Dendritic cell treated with granulocyte-macrophage colony-stimulating factor and Interleukin-4, amounts not matched to agents 40 ng/mL and 50 ng/mL, for 4 days (primary cell): ENCODE measurements at regions of chr14 and their contacts with region 1.

Region 1: DNA sequence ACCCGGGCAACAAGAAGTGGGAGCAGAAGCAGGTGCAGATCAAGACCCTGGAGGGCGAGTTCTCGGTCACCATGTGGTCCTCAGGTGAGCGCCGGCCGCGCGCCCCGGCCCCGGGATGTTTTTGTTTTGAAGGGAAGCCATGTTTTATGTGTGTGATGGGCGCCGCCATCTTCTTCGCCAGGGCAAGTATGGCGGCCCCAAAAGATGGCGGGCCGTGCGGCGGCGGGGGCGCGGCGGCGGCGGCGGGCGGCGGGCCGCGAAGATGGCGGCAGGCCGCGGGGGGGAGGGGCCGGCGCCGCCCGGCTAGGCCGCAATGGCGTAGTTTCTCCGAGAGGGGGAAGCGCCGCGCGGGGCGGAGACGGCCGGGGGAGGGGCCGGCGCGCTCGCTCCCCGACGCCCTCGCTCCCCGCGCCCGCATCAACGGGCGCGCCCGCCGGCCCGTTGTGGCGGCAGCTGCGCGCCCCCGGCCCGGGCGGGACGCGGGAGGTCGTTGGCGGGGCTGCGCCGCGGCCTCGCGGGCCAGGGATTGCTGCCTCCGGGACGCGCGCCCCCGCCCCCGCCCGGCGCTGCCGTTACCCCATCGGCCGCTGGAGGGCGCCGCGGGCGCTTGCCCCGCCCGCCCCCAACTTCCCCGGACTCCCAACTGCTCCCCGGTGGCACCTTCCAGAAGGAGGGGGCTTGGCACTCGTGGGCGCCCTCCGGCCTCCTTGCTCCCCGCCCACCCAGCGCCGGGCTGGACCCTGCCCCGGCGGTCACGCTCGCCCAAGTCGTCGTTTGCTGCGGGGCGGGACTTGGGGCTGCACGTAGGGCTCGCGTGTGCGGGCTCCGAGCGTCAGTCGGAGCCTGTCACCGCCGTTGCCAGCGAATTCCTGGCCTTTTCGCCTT is 1.1 kb downstream of the YY1 start:
- H3K4me3 Mint-ChIP-seq: peak overlapping the region; percentile 88
- H3K27ac Mint-ChIP-seq: peak overlapping the region; percentile 91
- H3K4me1 Mint-ChIP-seq: peaks cover 54% of the 10 kb centered on the region
- H3K27me3 Mint-ChIP-seq: no peaks in the 10 kb centered on the region

Region 2: GRCh38 chr14:100165831-100166440 is 74.1 kb before region 1 on chr14:
- intact Hi-C with region 1: loop called (anchors 2 kb)
- H3K4me3 Mint-ChIP-seq: no peak overlapping the region
- H3K27ac Mint-ChIP-seq: peak overlapping the region; percentile 80
- H3K4me1 Mint-ChIP-seq: peaks cover 19% of the 10 kb centered on the region
- H3K27me3 Mint-ChIP-seq: peaks cover 21% of the 10 kb centered on the region

Region 3: GRCh38 chr14:100192672-100193416 is 47.2 kb before region 1 on chr14:
- intact Hi-C with region 1: loop called (anchors 2 kb)
- H3K4me3 Mint-ChIP-seq: peak overlapping the region; percentile 82
- H3K27ac Mint-ChIP-seq: peak overlapping the region; percentile 96
- H3K4me1 Mint-ChIP-seq: peaks cover 20% of the 10 kb centered on the region
- H3K27me3 Mint-ChIP-seq: no peaks in the 10 kb centered on the region

Region 4: DNA sequence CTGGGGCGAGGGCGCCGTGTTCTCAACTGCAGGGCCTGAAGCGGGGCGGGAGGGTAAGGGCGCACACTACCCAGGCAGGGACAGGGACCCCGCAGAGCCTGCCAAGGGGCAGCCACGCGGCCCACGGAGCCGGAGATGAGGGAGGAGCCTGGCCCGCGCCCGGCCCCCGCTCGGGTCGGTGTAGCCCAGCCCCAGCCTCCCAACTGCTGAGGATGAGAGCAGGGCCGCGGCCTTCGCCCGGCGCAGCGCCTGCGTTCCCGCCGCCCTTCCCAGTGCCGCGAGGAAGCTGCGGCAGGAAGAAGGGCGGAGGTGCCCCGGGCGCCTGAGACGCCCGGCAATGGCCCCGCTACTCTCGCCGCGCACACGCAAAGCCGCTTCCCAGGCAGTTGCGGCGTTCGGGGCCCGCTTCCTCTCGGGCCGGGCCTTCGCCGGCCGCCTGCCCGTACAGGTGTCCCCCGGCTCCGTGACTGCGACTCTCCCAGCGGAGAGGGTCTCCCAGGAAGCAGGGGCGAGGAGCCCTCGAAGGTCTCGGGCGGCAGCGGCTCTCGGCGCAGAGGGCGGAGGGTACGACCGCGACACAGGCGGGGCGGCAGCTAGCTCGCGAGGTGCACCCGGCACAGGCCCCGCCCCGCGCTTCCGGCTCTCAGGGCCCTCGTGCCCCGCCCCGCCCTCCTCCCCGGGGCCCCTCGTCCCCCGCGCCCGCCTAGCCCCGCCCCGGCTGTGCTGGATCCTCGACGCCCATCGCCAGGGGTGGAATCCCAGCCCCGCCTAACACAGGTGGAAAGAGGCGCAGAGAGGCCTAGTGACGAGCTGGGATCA is 25.9 kb before region 1 on chr14:
- intact Hi-C with region 1: loop called (anchors 2 kb)
- H3K4me3 Mint-ChIP-seq: peak overlapping the region; percentile 78
- H3K27ac Mint-ChIP-seq: peak overlapping the region; percentile 91
- H3K4me1 Mint-ChIP-seq: peaks cover 35% of the 10 kb centered on the region
- H3K27me3 Mint-ChIP-seq: no peaks in the 10 kb centered on the region

Region 5: DNA sequence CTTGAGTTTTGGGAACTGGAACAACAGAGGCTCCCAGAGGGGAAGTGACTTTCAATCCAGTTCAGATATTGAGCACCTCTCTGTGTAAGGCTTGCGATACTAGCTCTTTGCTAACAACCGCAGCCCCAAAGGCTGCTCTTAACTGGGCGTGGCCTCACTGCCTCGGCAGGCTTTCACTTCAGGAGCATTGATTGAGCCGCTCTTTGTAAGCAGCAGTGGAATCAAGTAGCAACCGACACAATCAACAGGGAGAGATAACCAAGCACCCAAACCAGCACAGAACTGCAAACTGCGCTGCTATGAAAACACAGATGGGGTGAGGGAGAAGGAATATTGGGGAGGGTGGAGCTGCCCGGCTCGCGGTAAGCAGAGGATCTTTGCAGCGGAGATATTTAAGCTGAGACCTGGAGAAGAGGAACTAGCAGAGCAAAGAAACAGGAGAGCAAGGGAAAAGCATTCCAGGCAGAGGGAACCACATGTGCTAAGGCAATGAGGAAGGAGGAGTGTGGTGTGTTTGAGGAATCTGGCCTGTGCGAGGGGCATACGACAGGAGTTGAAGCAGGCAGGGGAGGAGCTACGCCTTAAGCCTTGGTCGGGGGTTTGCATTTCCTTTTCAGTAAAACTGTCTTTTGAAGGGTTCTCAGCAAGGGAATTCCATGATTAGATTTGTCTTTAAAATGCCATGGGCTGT is 18.4 kb before region 1 on chr14:
- intact Hi-C with region 1: loop called (anchors 2 kb)
- H3K4me3 Mint-ChIP-seq: no peak overlapping the region
- H3K27ac Mint-ChIP-seq: no peak overlapping the region
- H3K4me1 Mint-ChIP-seq: peaks cover 6% of the 10 kb centered on the region
- H3K27me3 Mint-ChIP-seq: no peaks in the 10 kb centered on the region

Region 6: DNA sequence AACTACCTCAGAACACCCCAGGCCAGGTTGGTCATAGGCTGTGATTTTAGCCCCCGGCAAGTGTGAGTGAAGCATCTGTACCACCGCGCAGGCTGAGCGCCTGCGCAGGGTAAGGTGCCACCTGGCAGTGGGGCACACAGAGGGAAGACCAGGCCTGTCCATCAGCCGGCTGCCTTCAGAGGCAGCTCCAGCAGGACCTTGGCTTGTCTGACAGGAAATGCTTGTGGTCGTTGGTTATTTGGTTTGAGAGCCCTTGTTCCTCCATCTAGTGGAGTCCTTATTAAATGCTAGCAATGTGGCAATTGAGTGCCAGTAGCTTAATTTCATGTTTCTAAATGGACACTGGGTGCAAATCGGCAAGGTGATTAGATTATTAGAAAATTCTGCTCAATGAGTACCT is 38.6 kb after region 1 on chr14:
- intact Hi-C with region 1: loop called (anchors 5 kb)
- H3K4me3 Mint-ChIP-seq: no peak overlapping the region
- H3K27ac Mint-ChIP-seq: peak overlapping the region; percentile 45
- H3K4me1 Mint-ChIP-seq: peaks cover 45% of the 10 kb centered on the region
- H3K27me3 Mint-ChIP-seq: no peaks in the 10 kb centered on the region

Region 7: DNA sequence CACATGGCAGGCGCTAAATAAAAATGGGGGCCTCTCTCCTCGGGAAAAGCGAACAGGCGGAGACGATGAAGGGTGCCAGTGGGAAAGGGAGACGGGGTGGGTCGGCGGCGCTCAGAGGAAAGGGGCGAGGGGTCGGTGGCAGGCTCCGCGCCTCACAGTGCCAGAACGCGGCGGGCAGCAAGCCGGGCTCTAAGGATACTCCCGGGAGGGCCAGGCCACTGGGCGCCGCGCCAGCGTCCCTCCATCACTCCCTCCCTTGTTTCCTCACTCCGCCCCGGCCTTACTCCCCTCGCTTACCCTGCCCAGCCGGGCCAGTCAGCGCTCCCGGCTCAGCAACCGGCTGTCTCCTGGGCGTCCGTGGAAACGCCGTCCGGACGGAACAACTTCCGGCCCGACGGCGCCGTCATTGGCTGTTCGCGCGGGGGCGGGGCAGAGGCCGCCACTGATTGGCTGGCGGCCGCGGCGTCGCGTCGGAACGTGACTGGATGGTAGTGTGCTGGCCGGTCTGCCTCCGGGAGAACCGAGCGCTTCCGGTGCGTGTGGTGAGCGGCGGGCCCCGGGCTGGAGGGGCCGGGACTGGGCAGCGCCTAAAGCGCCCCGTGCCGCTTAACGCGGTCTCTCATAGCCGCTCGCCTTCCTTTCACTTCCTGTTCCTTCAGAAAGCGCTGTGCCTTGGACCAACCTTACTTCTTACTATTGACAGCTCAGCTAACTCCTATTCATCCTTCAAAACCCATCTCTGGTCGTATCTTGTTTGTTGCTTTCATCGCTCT is 136.1 kb after region 1 on chr14:
- intact Hi-C with region 1: loop called (anchors 2 kb)
- H3K4me3 Mint-ChIP-seq: peak within 1 kb of the TSS; percentile 90
- H3K27ac Mint-ChIP-seq: peak within 1 kb of the TSS; percentile 100
- H3K4me1 Mint-ChIP-seq: peaks cover 57% of the 10 kb centered on the region
- H3K27me3 Mint-ChIP-seq: no peaks in the 10 kb centered on the region